Activated T-helper 1 cell treated with anti-CD3 and anti-CD28 coated beads, Interleukin-12 subunit alpha, Interleukin-12 subunit beta, Interleukin-2, Interleukin-4 antibody, amounts not matched to agents 30 ng/mL and 10 ng/mL and 1 ng/mL, durations not matched to agents 14 hours and 24 hours and 36 hours (primary cell): ENCODE measurements at regions of chr3 and their contacts with region 1.

Region 1: DNA sequence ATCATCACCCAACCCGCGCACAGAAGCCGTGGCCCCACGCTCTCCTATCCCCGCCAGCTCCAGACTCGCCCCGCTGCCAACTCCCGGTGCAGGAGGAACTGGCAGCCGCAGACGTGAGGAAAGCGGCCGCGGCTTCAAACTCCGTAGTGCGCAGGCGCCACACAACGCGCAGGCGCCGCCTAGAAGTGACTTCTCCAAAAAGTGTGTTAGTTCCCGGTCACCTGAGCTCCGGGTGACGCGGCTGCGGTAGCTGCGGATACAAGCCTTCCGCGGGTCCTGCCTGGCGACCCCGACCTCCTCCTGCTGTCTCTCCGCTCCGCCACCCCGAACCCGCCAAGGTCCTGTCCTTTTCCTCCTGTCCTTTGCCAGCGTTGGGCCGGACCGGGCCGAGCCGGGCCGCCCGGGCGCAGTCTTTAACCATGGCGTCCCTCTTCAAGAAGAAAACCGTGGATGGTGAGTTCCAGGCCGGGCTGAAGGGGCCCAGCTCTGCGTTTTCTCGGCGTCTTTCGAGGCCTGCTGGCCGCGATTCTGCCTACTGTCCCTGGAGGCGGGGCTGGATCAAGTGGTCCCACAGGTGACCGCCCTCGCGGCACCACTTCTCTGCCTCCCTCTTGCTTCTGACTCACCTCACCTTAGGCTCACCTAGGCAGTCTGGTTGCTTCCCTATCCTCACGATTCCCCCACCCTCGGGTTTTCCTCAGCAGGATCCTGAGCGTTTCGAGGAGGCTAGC is at the start of gene CHMP2B:
- DNase-seq: peak; percentile 87
- H3K4me3 Mint-ChIP-seq: peak within 1 kb of the TSS; percentile 98
- H3K27ac Mint-ChIP-seq: peak within 1 kb of the TSS; percentile 94
- H3K4me1 Mint-ChIP-seq: peaks cover 31% of the 10 kb centered on the region
- H3K27me3 Mint-ChIP-seq: peaks cover 16% of the 10 kb centered on the region
- total RNA-seq, gene CHMP2B: 28.2 and 29.6 TPM in 2 replicates

Region 2: DNA sequence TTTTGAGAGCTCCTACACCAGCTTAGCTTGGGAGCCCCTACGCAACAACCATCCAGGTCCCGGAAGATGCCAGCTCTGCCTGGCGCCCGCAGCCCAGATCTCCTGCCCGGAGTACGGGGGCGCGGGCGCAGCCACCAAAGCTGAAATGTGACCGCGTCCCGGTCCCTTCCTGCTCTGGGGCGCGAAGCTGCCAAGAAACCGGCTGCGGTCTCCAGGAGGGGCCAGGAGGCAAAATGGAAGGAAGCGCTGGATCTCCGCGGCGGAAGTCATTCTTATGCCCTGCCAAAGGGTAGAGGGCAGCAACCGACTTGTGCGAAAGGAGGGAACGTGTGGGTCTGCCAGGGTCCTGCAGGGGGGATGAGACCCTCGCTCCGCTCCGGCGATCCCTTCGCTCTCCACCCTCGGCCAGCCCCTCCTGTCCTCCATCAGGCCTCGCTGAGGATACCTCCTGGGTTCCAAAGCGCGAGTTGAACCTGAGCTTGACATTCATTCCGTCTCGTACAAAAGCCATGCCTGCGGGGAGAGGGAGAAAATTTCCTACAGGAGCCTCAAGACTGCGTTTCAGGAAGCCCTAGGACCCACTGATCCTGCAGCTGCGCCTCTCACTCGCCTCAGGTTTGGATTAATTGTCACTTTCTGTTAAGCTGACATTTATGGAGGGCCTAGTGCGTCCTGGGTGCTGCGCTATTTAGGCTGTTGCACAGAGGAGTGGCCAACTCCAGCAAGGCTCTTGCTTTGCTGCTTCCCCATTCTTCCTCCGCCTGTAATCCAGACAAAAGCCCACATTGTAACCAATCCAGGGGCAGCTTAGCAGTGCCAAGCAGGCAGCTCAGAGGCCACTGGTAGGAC is 138.1 kb before region 1 on chr3:
- intact Hi-C with region 1: loop called (anchors 5 kb)
- DNase-seq: no peak
- H3K4me3 Mint-ChIP-seq: peak overlapping the region; percentile 86
- H3K27ac Mint-ChIP-seq: peak overlapping the region; percentile 40
- H3K4me1 Mint-ChIP-seq: peaks cover 30% of the 10 kb centered on the region
- H3K27me3 Mint-ChIP-seq: peaks cover 6% of the 10 kb centered on the region